HepG2 (cell line): ENCODE measurements at regions of chr1 and their contacts with region 1.

Region 1: DNA sequence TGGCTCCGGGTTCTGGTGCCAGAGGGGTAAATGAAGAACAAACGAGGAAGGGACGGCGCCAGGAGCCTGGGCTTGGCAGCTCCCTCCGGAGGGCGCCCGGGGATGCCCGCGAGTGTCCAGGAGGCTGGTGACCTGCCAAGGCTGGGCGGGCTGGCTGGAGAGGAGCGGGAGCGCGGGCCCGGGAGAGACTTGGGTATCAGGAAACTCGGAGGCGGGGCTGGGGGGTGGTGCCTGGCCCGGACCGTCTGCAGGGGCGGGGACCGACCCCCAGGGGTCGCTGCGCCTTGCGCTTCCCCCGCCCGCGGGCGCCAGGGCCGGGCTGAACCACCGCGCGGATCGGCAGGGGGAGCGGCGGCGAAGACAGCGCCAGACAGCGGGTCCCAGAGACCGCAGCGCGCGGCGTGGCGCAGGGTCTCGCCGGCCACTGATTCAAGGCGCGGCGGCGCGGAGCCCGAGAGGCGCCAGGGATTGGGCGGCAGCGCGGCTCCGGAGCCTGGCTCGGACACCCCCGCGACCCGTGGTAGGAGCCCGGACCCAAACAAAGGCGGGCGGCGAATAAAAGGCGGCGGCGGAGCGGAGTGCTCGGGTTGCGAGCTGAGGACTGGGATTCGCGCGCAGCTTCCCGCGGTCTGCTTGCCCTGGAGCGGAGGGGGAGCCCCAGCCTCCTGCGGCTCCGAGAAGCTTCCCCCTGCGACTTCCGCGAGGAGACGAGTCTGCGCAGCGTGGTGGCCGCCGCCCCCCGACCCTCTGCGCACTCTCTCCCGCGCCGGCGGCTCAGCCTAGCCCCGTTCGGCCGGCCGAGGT is at the start of gene DISP3:
- DNase-seq: peak; percentile 54
- ATAC-seq: peak; percentile 87
- H3K4me3 ChIP-seq: peak within 1 kb of the TSS; percentile 58 to 71 (median 60)
- H3K27ac ChIP-seq: no peak within 1 kb of the TSS
- H3K4me1 ChIP-seq: no peaks in the 10 kb centered on the region
- H3K27me3 ChIP-seq: peaks cover 1 to 27% of the 10 kb centered on the region in 2 experiments; a peak in 3 of 5 replicates
- CTCF ChIP-seq: peak; percentile 75
- EP300 ChIP-seq: no peak
- POLR2A ChIP-seq: peak; percentile 56 to 79
- RAD21 ChIP-seq: peak; percentile 86
- total RNA-seq, gene DISP3: 0.13 and 0.17 TPM in 2 replicates

Region 2: GRCh38 chr1:11448375-11449099 is 30.2 kb before region 1 on chr1:
- CTCF ChIA-PET with region 1: no interaction called
- POLR2A ChIA-PET with region 1: no interaction called
- in situ Hi-C with region 1: no loop called
- intact Hi-C with region 1: loop called (anchors 1 kb)
- DNase-seq: no peak
- ATAC-seq: no peak
- H3K4me3 ChIP-seq: no peak overlapping the region
- H3K27ac ChIP-seq: no peak overlapping the region
- H3K4me1 ChIP-seq: no peaks in the 10 kb centered on the region
- H3K27me3 ChIP-seq: peaks cover 4 to 74% of the 10 kb centered on the region in 2 experiments; a peak in 3 of 5 replicates
- CTCF ChIP-seq: no peak
- EP300 ChIP-seq: no peak
- POLR2A ChIP-seq: no peak
- RAD21 ChIP-seq: no peak

Region 3: DNA sequence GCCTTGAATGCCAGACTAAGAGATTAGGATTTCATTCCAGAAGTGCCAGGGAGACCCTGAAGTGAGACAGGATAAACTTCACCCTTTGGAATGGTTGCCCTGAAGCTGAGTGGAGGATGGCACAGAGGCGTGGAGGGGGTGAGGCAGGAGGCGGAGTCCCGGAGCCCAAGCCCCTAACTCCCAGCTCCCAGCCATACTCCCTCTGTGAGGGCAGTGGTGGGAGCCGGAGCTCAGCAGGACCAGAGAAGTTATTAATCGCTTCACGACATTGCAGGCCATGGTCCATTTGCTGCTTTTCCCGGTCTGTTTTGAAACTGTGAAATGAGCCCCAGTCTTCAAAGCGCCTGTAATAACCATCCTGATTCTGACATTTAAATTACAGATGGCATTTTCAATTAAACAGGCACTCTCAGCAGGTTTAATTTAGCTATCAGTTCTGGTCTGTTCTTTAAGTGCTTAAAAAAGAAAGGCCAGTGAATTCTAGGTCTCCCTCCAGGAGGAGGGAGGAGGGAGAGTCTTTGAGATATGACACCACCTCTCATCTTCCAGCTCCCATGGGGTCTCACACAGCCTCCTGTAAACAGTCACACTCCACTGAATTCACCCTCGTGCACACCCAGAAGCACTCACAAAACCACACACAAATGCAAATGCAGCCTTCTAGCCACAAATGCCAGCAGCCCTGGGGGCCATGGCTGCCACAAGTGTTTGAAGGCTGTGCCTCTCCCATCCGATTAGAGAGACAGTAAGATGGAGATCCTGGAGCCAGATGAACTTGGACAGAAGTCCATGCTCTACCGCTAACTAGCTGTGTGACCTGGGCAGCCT is 155.8 kb after region 1 on chr1:
- CTCF ChIA-PET with region 1: no interaction called
- POLR2A ChIA-PET with region 1: no interaction called
- in situ Hi-C with region 1: loop called (anchors 5 kb)
- intact Hi-C with region 1: no loop called
- DNase-seq: no peak
- ATAC-seq: no peak
- H3K4me3 ChIP-seq: no peak overlapping the region
- H3K27ac ChIP-seq: no peak overlapping the region
- H3K4me1 ChIP-seq: no peaks in the 10 kb centered on the region
- H3K27me3 ChIP-seq: peaks cover 0 to 24% of the 10 kb centered on the region in 2 experiments; a peak in 2 of 5 replicates
- CTCF ChIP-seq: no peak
- EP300 ChIP-seq: no peak
- POLR2A ChIP-seq: no peak
- RAD21 ChIP-seq: no peak

Region 4: GRCh38 chr1:11719313-11720032 is 240.7 kb after region 1 on chr1:
- CTCF ChIA-PET with region 1: interaction called, 3 read pairs
- POLR2A ChIA-PET with region 1: no interaction called
- in situ Hi-C with region 1: loop called (anchors 10 kb)
- intact Hi-C with region 1: no loop called
- DNase-seq: no peak
- ATAC-seq: peak; percentile 68
- H3K4me3 ChIP-seq: peak overlapping the region; percentile 44 to 72 (median 46); a peak in 5 of 6 replicates
- H3K27ac ChIP-seq: no peak overlapping the region
- H3K4me1 ChIP-seq: peaks cover 11% of the 10 kb centered on the region
- H3K27me3 ChIP-seq: peaks cover 6 to 40% of the 10 kb centered on the region in 2 experiments; a peak in 4 of 5 replicates
- CTCF ChIP-seq: peak; percentile 95
- EP300 ChIP-seq: no peak
- POLR2A ChIP-seq: no peak
- RAD21 ChIP-seq: peak; percentile 88